ENCODE measurements at regions of chr19 and their contacts with region 1.

Region 1: DNA sequence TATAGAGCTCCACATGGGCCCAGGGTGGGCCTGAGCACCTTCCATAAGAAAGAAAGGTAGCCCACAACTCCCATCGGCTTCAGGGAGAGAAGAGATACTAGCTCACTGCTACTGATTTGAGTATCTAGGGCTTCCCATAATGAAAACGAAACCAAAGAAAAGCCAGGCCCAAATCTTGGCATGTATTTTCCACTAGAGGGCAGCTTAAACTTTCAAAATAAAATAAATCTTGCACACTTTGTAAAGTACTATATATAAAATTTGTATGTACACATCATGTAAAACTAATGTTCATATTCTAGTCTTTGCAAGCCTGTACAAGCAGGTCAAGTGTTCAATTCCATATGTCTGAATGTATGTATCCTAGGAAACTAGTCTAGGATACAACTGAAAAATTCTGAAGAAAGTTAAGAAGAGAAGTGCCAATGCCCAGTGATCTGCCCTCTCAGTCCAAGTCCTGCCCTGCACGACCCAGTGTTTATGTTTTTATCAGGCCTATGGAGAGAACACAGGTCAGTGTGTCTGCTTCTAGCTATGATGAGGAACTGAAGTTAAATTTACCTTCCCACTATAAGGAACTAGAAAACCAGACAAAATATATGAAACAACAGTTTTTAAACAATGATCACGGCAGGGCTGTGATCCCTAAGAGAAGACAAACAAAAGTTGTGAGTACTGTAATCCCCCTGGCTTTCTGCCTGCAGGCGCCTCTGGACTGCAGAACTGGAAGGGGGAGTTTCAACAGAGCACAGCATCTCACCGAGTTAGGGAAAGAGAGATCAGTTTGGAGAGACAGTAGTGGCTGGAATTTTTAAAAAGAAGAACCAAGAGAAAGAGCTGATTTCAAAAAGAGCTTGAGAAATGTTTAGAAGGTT is 475.7 kb downstream of the UQCRFS1 start:
- DNase-seq: peak; percentile 53
- H3K4me3 ChIP-seq: no peak overlapping the region
- H3K27ac ChIP-seq: no peak overlapping the region
- H3K4me1 ChIP-seq: no peaks in the 10 kb centered on the region
- CTCF ChIP-seq: peak; percentile 85

Region 2: DNA sequence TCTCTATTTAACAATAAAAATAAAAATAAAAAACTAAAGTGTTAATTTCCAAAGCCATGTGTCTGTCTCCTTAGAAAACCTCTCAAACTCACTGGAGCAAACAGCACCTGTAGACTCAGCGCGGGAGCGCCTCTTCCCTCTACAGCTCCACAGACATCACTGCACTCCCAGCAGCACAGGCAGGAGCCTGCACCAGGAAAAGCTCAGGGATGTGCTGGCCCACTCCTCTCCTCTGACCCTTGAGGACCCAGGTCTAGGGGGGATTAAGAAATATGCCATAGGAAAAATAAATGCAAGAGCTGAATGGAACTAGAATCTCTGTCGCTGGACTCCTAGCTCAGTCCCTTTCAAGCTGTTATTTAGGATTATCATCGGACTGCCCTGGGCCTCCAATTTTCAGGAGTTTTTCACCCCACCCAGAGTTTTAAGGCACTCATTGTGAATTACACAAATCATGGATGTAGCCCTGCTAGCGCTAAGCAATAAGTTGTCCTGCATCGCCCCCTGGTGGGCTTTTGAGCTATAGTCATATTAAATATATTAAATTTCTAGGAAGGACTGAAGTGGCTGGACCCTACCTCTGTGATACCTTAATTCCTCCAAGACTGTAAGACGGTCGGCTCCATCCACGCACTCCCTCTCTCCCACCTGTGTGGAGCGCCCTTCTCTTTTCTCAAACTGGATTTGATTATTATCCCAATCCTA is 141.8 kb after region 1 on chr19:
- CTCF ChIA-PET with region 1: no interaction called
- POLR2A ChIA-PET with region 1: no interaction called
- intact Hi-C with region 1: loop called (anchors 1 kb)
- DNase-seq: peak; percentile 82
- H3K4me3 ChIP-seq: no peak overlapping the region
- H3K27ac ChIP-seq: no peak overlapping the region
- H3K4me1 ChIP-seq: no peaks in the 10 kb centered on the region
- CTCF ChIP-seq: peak; percentile 84

Region 3: DNA sequence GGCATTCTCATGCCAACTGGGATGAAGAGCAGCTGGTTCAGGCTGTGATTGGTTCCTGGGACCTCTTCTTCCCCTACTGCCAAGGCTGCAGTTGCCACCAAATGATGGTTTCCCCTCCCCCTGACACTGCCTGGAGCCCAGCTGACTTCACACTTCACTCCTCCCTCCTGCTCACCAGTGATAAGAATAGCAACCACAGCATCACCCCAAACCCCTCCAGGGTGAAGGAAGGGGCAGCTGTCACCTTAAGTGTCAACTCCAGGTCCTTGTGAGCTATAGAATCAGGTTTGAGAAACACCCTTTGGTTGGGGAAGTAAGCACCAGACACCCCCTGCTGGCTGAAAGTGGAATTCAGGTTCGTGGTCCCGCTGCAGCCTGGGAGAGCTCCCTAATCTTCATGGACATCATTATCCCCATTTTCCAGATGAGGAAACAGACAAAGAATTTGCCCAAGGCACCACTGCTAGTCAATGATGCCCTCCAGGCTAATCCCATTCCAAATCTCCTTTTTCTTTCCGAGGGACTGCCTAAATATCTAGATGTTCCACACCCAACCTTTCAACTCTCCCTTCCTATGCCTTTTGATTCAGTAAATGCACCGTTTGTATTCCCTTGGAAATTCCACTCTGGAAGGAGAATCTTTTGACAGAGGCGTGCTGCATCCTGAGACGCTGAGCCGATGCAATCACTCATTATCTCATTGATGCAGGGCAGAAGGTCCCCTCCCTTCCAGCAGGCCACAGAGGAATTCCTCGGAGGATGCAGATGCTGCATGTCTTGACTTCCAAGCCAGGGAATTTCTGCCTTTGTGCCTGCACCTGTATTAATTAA is 526.3 kb after region 1 on chr19:
- CTCF ChIA-PET with region 1: no interaction called
- POLR2A ChIA-PET with region 1: no interaction called
- intact Hi-C with region 1: loop called (anchors 5 kb)
- DNase-seq: peak; percentile 53
- H3K4me3 ChIP-seq: no peak overlapping the region
- H3K27ac ChIP-seq: no peak overlapping the region
- H3K4me1 ChIP-seq: no peaks in the 10 kb centered on the region
- CTCF ChIP-seq: peak; percentile 88

Region 4: DNA sequence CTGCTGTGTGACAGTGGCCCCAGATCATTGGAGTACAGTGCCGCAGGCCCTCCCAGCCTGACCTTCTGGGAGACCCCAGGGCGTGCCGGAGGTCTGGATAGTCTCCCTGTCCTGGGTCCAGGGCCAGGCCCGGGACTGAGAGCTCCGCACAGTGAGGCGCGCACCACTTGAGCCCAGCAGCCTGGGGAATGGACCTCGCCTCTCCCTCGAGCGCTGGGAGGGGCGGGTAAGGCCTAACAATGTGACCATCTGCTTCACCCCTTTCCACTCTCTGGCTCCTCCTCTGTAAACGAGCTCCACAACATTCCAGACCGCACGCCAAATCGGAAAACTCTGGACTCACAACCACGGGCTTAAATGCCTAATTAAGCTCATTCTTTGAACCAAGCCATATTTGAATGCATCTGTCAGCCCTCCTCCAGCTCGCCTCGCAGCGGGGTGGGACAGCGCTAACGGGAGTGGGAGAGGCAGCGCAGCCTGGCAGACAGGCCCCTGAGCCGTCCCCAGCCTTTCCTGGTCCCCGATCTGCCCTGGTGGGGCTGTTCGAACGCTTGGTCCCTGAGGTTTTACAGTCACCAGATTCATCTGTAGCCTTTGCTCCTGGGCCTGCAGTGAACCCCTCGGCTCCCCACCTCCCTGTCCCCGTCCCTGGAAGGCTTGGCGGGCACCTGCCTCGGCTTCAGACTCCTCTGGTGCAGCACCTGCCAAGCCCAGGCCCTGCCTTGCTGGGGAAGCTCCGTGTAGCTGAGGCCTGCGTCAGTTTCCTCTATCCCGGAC is 667.9 kb after region 1 on chr19:
- CTCF ChIA-PET with region 1: no interaction called
- POLR2A ChIA-PET with region 1: no interaction called
- intact Hi-C with region 1: no loop called
- DNase-seq: no peak
- H3K4me3 ChIP-seq: no peak overlapping the region
- H3K27ac ChIP-seq: no peak overlapping the region
- H3K4me1 ChIP-seq: no peaks in the 10 kb centered on the region
- CTCF ChIP-seq: no peak

Measured in OCI-LY7 (cell line).